CD8-positive, alpha-beta T cell (primary cell): ENCODE measurements at regions of chr2 and their contacts with region 1.

Region 1: DNA sequence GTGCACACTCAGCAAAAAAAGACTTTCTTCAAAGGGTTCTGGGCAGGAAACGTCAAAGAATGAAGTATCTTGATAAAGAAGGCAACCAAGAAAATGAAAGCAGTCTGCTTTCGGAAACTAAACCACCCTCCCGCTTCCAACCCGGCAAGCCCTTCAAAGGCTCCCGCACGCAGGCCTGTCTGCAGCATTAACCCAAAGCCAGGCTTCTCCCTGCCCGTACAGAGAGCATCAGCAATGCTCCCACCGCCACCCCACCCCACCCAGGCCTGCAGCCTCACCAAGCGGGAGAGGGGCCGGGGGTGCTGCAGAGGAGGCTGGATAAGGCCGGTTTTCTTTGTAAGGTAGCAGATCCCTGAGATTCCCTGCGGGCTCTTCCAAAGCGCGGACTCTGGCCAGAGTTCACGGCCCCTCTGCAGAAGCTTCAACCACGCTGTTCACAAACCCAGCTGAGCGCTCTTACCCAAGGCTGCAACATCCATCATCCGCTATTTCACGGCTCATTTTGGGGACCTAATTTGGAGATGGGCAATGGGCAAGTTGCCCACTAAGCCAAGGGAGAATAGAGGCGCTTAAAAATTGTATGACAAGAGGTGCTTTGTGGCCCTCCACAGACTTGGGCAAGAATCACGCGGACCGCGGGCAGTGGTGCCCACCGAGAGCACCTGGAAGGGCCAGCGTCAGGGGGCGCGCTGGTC is 225.6 kb upstream of the ID2 start:
- DNase-seq: peak in 7 of 9 experiments; percentile 32 to 77 (median 59)
- ATAC-seq: peak; percentile 70
- H3K4me3 ChIP-seq: peak overlapping the region; percentile 36 to 40
- H3K4me3 Mint-ChIP-seq: peak overlapping the region; percentile 86
- H3K27ac ChIP-seq: peak overlapping the region in 1 of 2 experiments; percentile 80
- H3K27ac Mint-ChIP-seq: peak overlapping the region; percentile 86
- H3K4me1 ChIP-seq: peaks cover 20% of the 10 kb centered on the region
- H3K4me1 Mint-ChIP-seq: peaks cover 29% of the 10 kb centered on the region
- H3K27me3 ChIP-seq: no peaks in the 10 kb centered on the region
- H3K27me3 Mint-ChIP-seq: peaks cover 16% of the 10 kb centered on the region
- CTCF ChIP-seq: no peak

Region 2: DNA sequence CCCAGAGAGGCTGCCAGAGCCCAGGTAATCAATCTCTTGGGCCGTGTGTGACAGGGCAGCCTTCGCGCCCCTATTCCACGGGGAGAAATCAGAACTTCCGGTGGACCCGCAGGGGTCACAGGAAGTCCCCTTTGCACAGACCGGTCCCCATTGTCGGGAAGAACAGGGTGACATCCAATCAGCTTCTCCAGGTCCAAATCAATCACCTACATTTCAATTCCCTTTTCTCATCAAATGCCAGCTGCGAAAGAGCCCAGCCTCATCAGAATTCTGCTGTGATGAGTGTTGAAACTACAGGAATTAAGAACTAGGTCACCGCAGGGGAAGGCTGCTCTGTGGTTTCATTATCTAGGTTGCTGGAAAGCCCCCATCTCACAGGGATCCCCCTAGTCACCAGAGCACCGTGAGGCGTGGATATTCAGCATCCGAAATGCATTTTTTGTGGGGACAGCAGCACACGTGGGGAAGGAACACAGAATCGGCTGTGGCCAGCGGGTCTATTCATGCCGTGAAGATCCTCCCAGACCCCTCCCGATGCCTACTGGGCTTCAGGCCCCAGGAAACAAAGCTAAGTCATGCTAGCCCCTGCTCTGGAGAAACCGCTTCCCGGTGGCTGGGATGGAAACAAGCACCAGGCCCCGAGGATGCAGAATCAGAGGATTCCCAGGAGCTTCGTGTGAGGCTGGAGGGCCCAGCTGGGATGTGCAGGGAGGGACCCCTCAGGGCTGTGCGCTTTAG is 31.9 kb after region 1 on chr2:
- CTCF ChIA-PET with region 1: no interaction called
- POLR2A ChIA-PET with region 1: no interaction called
- intact Hi-C with region 1: loop called in 1 of 2 experiments (anchors 1 kb)
- DNase-seq: peak in 8 of 9 experiments; percentile 41 to 95 (median 64)
- ATAC-seq: peak; percentile 89
- H3K4me3 ChIP-seq: peak overlapping the region; percentile 18 to 48
- H3K4me3 Mint-ChIP-seq: peak overlapping the region; percentile 76
- H3K27ac ChIP-seq: peak overlapping the region; percentile 26 to 89
- H3K27ac Mint-ChIP-seq: peak overlapping the region; percentile 88
- H3K4me1 ChIP-seq: peaks cover 23% of the 10 kb centered on the region
- H3K4me1 Mint-ChIP-seq: peaks cover 37% of the 10 kb centered on the region
- H3K27me3 ChIP-seq: no peaks in the 10 kb centered on the region
- H3K27me3 Mint-ChIP-seq: no peaks in the 10 kb centered on the region
- CTCF ChIP-seq: no peak

Region 3: DNA sequence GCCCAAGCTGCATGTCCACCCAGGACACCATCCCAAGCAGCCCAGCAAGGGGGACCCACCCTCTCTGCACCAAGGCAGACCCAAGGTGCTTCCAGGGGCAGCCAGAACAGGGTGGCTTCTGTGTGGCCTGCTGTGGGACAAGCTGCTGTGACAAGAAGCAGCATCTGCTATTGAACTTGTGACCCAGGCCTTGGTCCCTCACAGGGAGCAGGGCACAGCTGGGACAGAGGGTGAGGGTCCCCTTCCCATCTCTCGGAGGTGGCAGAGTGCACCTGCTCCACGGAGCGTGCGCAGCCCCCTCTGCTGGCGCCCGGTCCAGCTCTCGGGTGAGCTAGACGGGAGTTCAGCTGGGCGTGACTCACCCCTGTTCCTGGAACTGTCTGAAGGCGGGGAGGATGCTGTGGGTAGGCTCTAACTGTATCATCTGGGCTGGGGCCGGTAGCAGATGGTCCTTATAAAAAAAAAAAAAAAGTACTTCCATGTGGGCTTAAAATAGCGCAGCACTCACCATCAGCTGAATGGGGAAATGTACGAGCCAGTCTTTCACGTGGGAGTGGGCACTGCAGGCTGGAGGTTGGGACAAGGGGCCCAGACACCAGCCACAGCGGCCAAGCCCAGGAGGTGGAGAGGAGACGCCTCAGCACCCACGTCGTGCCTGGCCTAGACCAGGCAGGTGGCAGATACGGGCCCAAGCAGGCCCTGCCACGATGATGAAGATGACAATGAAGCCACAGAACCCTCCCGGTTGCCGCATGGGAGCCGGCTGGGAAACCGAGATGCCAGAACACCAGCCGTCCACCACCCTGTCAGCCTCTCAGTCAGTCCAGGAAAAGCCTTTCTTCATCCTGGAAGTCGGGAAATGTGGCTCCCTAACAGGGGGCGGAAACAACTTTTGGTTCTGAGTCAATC is 88.7 kb after region 1 on chr2:
- CTCF ChIA-PET with region 1: no interaction called
- POLR2A ChIA-PET with region 1: no interaction called
- intact Hi-C with region 1: loop called in 1 of 2 experiments (anchors 5 kb)
- DNase-seq: peak; percentile 21 to 90 (median 76)
- ATAC-seq: peak; percentile 87
- H3K4me3 ChIP-seq: no peak overlapping the region
- H3K4me3 Mint-ChIP-seq: no peak overlapping the region
- H3K27ac ChIP-seq: peak overlapping the region in 1 of 2 experiments; percentile 88
- H3K27ac Mint-ChIP-seq: peak overlapping the region; percentile 75
- H3K4me1 ChIP-seq: peaks cover 29% of the 10 kb centered on the region
- H3K4me1 Mint-ChIP-seq: peaks cover 40% of the 10 kb centered on the region
- H3K27me3 ChIP-seq: no peaks in the 10 kb centered on the region
- H3K27me3 Mint-ChIP-seq: no peaks in the 10 kb centered on the region
- CTCF ChIP-seq: peak; percentile 42

Region 4: DNA sequence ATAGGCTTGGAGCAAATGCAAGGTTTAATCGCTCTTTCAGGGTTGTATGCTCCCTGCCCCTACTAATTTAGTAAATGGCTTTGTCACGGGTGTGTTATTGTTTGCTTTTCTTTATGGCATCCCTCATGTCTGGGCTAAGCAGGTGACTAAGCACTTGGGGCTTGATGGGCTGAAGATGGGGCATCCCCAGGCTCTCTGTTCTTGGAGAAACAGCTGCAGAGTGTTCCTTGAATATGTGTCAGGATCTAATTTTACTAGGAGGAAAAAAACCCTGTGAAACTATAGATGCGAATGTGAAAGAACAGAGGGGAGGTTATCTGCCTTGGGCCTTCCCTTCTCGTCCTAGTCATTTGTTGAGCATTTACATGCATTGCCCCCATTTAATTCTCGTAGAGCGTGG is 1292.3 kb after region 1 on chr2:
- CTCF ChIA-PET with region 1: no interaction called
- POLR2A ChIA-PET with region 1: no interaction called
- intact Hi-C with region 1: no loop called
- DNase-seq: no peak
- ATAC-seq: no peak
- H3K4me3 ChIP-seq: no peak overlapping the region
- H3K4me3 Mint-ChIP-seq: no peak overlapping the region
- H3K27ac ChIP-seq: no peak overlapping the region
- H3K27ac Mint-ChIP-seq: no peak overlapping the region
- H3K4me1 ChIP-seq: peaks cover 13% of the 10 kb centered on the region
- H3K4me1 Mint-ChIP-seq: peaks cover 23% of the 10 kb centered on the region
- H3K27me3 ChIP-seq: no peaks in the 10 kb centered on the region
- H3K27me3 Mint-ChIP-seq: peaks cover 4% of the 10 kb centered on the region
- CTCF ChIP-seq: no peak